Activated CD4-positive, alpha-beta T cell treated with anti-CD3 and anti-CD28 coated beads, Interleukin-2, amount 10 ng/mL, durations not matched to agents 24 days and 14 days (primary cell): ENCODE measurements at regions of chr2 and their contacts with region 1.

Region 1: DNA sequence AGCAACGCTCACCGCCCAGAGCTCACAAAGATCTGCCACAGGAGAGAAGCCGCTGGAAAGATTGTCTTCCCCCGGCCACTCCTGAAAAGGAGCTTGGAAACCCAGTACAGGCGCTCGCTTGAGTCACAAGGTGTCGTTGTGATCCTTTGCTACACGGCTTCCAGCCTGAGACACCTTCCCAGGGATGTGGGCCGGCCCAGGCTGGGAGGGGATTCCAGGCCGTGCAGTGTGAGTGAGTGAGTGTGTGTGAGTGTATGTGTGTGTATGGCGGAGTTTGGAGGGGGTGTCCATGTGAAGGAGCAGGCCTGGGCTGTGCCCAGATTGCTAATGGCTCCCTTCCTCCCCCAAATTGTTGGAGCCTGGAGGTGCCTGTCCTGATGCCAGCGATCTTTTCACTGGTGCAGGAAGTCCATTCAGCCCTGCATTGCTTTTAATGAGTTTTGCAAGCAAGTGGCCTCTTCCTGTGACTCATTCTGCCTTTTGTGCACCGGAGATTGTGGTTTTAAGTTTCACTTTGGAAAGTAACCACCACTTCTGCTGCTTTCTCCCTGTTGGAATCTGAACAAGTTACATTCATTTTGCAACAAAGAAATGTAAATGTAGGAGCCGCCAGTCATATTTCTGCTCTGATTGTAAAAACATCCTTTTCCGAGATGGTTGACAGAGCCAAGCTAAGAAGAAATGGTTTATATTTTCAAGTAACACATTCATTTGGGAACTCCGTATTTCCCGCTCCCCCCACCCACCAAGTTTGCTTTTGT is 83.7 kb downstream of the LPIN1 start:
- DNase-seq: peak; percentile 89
- H3K4me3 Mint-ChIP-seq: peak overlapping the region; percentile 73
- H3K27ac Mint-ChIP-seq: peak overlapping the region; percentile 85
- H3K4me1 Mint-ChIP-seq: peaks cover 37% of the 10 kb centered on the region
- H3K27me3 Mint-ChIP-seq: peaks cover 37% of the 10 kb centered on the region

Region 2: GRCh38 chr2:11743846-11744553 is 86.1 kb before region 1 on chr2:
- intact Hi-C with region 1: loop called (anchors 2 kb)
- DNase-seq: peak; percentile 90
- H3K4me3 Mint-ChIP-seq: peak overlapping the region; percentile 29
- H3K27ac Mint-ChIP-seq: peak overlapping the region; percentile 78
- H3K4me1 Mint-ChIP-seq: peaks cover 45% of the 10 kb centered on the region
- H3K27me3 Mint-ChIP-seq: no peaks in the 10 kb centered on the region

Region 3: DNA sequence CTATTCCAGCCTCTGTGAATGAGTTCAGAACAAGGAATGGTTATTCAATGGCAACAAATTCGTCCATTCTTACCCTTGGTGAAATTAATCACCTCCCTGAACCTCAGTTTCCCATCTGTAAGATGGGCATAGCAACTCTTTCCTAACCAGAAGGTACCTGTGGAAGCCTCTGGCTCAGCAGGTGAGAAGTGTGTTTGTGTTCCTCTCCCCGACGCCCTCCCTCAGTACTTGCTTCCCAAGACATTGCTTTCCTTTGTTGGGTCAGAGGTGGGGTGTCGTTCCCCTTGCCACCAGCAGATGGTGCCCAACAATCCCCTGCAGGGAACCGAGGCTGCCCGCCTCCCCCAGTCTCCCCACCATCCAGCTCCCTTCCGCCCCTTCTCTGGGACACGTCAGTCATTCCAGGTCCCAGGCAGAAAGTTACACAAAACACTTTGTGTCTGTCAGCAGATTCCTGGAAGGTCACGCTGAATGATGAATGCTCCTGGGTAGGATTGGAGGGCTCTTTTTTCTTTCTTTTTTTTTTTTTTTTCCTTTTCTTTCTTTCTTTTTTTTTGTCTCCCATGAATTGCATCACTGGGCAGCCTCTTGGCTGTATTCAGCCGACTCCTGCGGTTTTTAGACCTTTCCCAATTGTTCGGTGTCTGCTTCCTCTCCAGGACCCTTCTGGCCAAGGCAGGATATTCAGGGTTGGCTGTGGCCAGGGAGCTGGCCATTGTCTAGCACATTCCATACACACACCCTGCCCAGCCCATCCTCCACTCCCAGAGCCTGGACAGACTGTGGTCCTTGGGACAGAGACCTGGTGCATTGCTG is 33.6 kb after region 1 on chr2:
- intact Hi-C with region 1: no loop called
- DNase-seq: peak; percentile 89
- H3K4me3 Mint-ChIP-seq: no peak overlapping the region
- H3K27ac Mint-ChIP-seq: no peak overlapping the region
- H3K4me1 Mint-ChIP-seq: peaks cover 9% of the 10 kb centered on the region
- H3K27me3 Mint-ChIP-seq: peaks cover 17% of the 10 kb centered on the region

Region 4: GRCh38 chr2:12284487-12284886 is 454.4 kb after region 1 on chr2:
- intact Hi-C with region 1: loop called (anchors 1 kb)
- DNase-seq: peak; percentile 29
- H3K4me3 Mint-ChIP-seq: no peak overlapping the region
- H3K27ac Mint-ChIP-seq: no peak overlapping the region
- H3K4me1 Mint-ChIP-seq: peaks cover 21% of the 10 kb centered on the region
- H3K27me3 Mint-ChIP-seq: peaks cover 40% of the 10 kb centered on the region

Region 5: GRCh38 chr2:12501469-12502158 is 671.5 kb after region 1 on chr2:
- intact Hi-C with region 1: loop called (anchors 1 kb)
- DNase-seq: peak; percentile 94
- H3K4me3 Mint-ChIP-seq: peak overlapping the region; percentile 65
- H3K27ac Mint-ChIP-seq: peak overlapping the region; percentile 84
- H3K4me1 Mint-ChIP-seq: peaks cover 86% of the 10 kb centered on the region
- H3K27me3 Mint-ChIP-seq: no peaks in the 10 kb centered on the region

Region 6: GRCh38 chr2:12856934-12857601 is 1026.9 kb after region 1 on chr2:
- intact Hi-C with region 1: loop called (anchors 1 kb)
- DNase-seq: peak; percentile 79
- H3K4me3 Mint-ChIP-seq: no peak overlapping the region
- H3K27ac Mint-ChIP-seq: no peak overlapping the region
- H3K4me1 Mint-ChIP-seq: peaks cover 27% of the 10 kb centered on the region
- H3K27me3 Mint-ChIP-seq: peaks cover 9% of the 10 kb centered on the region

Region 7: GRCh38 chr2:13006829-13007717 is 1176.9 kb after region 1 on chr2:
- intact Hi-C with region 1: loop called (anchors 1 kb)
- DNase-seq: peak; percentile 88
- H3K4me3 Mint-ChIP-seq: no peak overlapping the region
- H3K27ac Mint-ChIP-seq: no peak overlapping the region
- H3K4me1 Mint-ChIP-seq: no peaks in the 10 kb centered on the region
- H3K27me3 Mint-ChIP-seq: peaks cover 45% of the 10 kb centered on the region